ENCODE measurements at regions of chr9 and their contacts with region 1.

Region 1: DNA sequence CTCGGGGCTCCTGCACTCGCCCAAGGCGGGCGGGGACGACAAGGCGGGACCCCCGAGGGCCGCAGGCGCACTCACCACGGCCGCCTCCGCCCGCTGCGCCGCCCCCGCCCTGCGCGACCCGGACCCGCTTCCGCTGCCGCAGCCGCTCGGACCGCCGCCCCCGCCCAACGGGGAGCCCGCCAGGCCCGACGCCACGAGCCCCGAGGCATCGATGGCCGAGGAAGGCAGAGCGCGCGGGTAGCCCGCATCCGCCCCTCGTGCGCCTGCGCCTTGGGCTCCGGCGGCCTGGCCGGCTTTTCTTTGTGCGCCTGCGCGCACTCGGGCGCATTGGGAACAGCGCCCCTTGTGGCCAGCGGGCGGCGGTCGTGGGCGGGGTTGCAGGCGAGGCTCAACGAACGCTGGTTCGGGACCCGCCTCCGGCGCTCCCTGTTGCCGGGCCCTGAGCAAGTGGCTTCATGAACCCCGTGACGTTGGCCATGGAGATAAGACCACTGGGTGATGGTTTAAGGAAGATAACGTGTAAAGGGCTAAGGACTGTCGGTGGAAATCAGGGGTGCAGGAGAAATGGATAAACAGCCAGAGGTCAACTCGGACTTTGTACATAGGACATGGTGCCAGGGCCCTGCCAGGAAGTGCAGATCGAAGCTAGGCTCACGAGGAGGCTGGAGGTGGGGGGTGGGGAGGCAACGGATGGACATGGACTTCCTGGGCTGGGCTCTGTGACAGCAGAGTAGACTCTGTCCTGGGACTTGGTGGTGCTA is at the starts of genes C8G and FBXW5:
- DNase-seq: peak; percentile 95
- H3K4me3 ChIP-seq: peak within 1 kb of the TSS; percentile 36 to 97 (median 79)
- H3K27ac ChIP-seq: peak within 1 kb of the TSS; percentile 90 to 96 (median 92)
- H3K4me1 ChIP-seq: peaks cover 7 to 37% (median 23%) of the 10 kb centered on the region in 4 donors
- H3K27me3 ChIP-seq: no peaks in the 10 kb centered on the region
- CTCF ChIP-seq: peak; percentile 98 to 99 (median 99)
- EP300 ChIP-seq: no peak
- POLR2A ChIP-seq: peak; percentile 4
- total RNA-seq, gene C8G: 4.3 to 7.9 (median 6.4) TPM in 3 of 4 donors, not detected in the other
- total RNA-seq, gene FBXW5: 294 to 820 (median 446) TPM

Region 2: DNA sequence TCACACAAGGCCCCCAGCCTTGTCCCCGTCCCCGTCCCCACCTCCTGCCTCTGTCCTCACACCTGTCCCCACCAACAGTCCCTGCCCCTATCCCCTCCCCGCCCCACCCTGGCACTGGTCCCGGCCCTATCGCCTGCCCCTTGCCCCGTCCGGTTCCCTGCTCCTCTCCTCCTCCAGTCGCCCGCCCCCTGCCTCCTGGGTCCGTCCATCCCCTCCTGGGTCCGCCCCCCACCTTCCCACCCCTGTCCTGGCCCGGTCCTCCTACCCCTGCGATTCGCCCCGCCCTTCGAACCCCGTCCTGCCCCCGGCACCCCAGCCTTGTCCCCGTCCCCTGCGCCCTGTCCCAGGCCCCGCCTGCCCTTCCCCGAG is 79.0 kb before region 1 on chr9:
- in situ Hi-C with region 1: no loop called
- intact Hi-C with region 1: loop called (anchors 10 kb)
- DNase-seq: peak; percentile 66
- H3K4me3 ChIP-seq: peak overlapping the region; percentile 77 to 95 (median 92)
- H3K27ac ChIP-seq: peak overlapping the region; percentile 89 to 98 (median 94)
- H3K4me1 ChIP-seq: peaks cover 7 to 43% (median 24%) of the 10 kb centered on the region in 4 donors
- H3K27me3 ChIP-seq: no peaks in the 10 kb centered on the region
- CTCF ChIP-seq: no peak
- EP300 ChIP-seq: no peak
- POLR2A ChIP-seq: no peak

Region 3: DNA sequence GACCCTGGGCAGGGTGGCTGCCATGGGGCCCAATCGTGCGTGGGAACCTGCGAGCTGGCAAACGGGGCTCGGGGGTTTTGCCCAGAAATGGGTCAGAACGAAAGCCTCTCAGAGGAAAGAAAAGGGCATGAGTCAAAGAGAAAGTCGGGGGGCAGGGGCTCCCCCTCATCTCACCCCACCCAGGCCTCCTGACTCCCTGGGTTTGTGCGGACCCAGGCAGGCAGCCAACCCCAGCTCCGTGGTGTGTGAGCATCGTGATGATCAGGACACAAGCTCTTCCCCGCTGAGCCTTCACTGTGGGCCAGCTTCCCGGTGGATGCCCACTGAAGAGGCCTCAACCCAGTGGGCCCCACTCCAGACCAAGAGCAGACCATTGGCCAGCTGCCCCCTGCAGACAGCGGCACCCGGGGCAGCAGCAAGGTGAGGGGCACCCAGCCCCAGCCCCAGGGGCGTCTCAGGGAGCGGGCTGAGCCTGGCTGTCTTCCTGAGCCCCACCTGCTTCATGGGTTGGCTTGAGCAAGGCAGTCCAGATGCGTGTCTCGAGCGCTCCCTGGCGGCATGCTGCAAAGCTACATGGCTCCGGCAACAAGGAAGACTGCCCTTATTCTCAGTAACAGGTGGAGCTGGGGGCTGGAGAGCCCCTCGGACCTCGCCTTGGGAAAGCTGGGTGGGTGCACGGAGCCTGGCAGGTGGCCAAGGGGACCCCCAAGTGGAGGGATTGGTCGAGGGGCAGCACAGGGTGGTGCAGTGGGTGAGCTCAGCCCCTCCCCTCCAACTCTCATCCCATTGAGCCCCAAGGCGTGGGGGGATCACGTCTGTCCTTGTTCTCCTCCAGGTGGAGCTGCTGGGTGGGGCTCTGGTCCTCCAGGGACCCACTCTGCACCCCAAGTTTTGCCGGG is 90.4 kb after region 1 on chr9:
- in situ Hi-C with region 1: no loop called
- intact Hi-C with region 1: loop called (anchors 5 kb)
- DNase-seq: peak; percentile 85
- H3K4me3 ChIP-seq: no peak overlapping the region
- H3K27ac ChIP-seq: peak overlapping the region; percentile 27 to 66 (median 34)
- H3K4me1 ChIP-seq: peaks cover 7 to 29% (median 18%) of the 10 kb centered on the region in 4 donors
- H3K27me3 ChIP-seq: no peaks in the 10 kb centered on the region
- CTCF ChIP-seq: peak; percentile 88 to 95 (median 90)
- EP300 ChIP-seq: no peak
- POLR2A ChIP-seq: no peak